ENCODE measurements at regions of chr1 and their contacts with region 1.

Region 1: GRCh38 chr1:89804642-89805237 is 16.1 kb upstream of the LRRC8D start:
- DNase-seq: peak; percentile 61 to 84
- ATAC-seq: peak; percentile 84 to 92; a peak in 5 of 6 replicates
- H3K4me3 ChIP-seq: no peak overlapping the region
- H3K27ac ChIP-seq: peak overlapping the region in 1 of 2 experiments; percentile 45; a peak in 1 of 6 replicates
- H3K4me1 ChIP-seq: peaks cover 33% of the 10 kb centered on the region
- CTCF ChIP-seq: peak; percentile 89
- EP300 ChIP-seq: no peak
- POLR2A ChIP-seq: no peak
- RAD21 ChIP-seq: peak; percentile 88 to 95

Region 2: GRCh38 chr1:89780721-89781120 is 24.0 kb before region 1 on chr1:
- CTCF ChIA-PET with region 1: interaction called, 11 read pairs
- POLR2A ChIA-PET with region 1: no interaction called
- DNase-seq: peak; percentile 56 to 69
- ATAC-seq: peak; percentile 90 to 98
- H3K4me3 ChIP-seq: no peak overlapping the region
- H3K27ac ChIP-seq: no peak overlapping the region
- H3K4me1 ChIP-seq: peaks cover 6% of the 10 kb centered on the region; the same call in 1 of the 3 replicates
- CTCF ChIP-seq: peak; percentile 55
- EP300 ChIP-seq: no peak
- POLR2A ChIP-seq: no peak
- RAD21 ChIP-seq: peak; percentile 67 to 74

Region 3: DNA sequence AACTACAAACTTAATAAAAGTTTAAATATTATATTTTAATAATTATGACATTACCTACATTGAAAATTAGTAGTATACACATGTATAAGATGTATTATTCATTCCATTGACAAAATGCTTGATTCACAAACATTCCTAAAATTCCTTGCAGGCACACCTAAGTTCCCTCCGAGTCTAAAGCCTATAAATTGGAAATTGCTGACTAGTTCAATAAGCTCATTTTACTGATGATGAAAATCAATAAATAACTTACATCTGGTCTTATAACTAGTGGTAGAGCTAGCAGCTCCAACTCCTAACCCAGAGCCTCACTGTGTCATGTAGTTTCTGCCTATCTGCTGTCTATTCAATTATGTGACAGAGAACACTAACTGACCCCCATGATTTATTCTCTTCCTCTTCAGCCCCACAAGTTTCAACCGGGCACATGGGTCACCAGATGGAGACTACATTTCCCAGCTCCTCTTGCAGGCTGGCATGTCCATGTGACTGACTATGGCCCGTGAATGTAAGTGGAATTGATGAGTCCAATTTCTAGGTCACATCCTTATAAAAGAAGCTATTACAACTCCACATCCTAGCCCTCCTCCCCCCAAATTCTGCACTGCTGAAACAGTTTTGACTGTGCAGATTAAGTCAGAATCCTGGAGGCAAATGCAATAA is 13.5 kb before region 1 on chr1:
- CTCF ChIA-PET with region 1: interaction called, 11 read pairs
- POLR2A ChIA-PET with region 1: no interaction called
- DNase-seq: no peak
- ATAC-seq: no peak
- H3K4me3 ChIP-seq: no peak overlapping the region
- H3K27ac ChIP-seq: no peak overlapping the region
- H3K4me1 ChIP-seq: no peaks in the 10 kb centered on the region
- CTCF ChIP-seq: no peak
- EP300 ChIP-seq: no peak
- POLR2A ChIP-seq: no peak
- RAD21 ChIP-seq: no peak

Region 4: DNA sequence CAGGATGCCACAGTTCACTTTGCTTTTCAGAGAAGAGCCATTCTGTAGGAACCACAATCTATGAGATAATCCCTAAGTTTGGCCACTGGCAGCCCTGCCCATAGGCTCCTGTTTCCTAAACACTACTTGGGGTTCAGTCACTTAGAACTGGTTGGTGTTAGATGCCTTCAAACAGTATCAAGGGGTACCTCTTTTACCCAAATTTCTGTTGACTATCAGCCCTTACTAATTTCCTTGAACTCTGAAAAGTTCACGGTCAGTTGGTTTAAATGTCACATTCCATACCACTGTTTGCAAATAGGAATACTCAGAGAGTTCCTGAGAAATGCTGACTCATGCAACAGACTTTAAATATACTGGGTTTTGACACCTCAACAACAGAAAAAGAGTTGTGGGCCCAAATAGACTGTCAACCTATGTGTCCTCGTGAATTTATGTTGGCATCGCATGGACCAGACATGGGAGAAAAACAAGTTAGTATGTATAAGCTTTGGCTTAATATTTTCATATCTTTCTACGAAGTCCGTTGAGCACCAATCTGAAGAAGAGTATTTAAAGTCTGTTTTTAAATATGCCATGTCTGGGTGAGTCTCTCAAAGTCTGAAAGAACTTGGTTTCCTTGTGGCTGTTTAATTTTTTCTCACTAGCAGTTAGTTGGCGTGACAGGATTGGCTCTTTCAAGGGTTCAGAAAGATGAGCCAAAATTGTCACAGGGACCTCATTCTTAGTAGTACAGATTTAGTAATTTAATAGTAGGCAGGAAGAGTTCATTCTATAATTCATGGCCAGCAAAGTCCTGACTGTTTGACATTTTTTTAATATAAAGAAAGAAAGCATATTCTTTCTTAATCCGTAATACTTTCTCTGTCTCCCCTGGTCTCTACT is 133.7 kb after region 1 on chr1:
- CTCF ChIA-PET with region 1: no interaction called
- POLR2A ChIA-PET with region 1: no interaction called
- DNase-seq: peak in 1 of 2 experiments; percentile 40
- ATAC-seq: no peak
- H3K4me3 ChIP-seq: no peak overlapping the region
- H3K27ac ChIP-seq: peak overlapping the region; percentile 36 to 89
- H3K4me1 ChIP-seq: peaks cover 52% of the 10 kb centered on the region
- CTCF ChIP-seq: no peak
- EP300 ChIP-seq: no peak
- POLR2A ChIP-seq: no peak
- RAD21 ChIP-seq: no peak